Endothelial cell of umbilical vein (primary cell): ENCODE measurements at regions of chr9 and their contacts with region 1.

Region 1: GRCh38 chr9:83544002-83544698 is 5.9 kb upstream of the FRMD3 start:
- DNase-seq: peak; percentile 65
- H3K4me3 ChIP-seq: no peak overlapping the region
- H3K27ac ChIP-seq: no peak overlapping the region
- H3K4me1 ChIP-seq: no peaks in the 10 kb centered on the region
- H3K27me3 ChIP-seq: peaks cover 2% of the 10 kb centered on the region in 2 experiments
- CTCF ChIP-seq: peak; percentile 70 to 75
- POLR2A ChIP-seq: no peak

Region 2: DNA sequence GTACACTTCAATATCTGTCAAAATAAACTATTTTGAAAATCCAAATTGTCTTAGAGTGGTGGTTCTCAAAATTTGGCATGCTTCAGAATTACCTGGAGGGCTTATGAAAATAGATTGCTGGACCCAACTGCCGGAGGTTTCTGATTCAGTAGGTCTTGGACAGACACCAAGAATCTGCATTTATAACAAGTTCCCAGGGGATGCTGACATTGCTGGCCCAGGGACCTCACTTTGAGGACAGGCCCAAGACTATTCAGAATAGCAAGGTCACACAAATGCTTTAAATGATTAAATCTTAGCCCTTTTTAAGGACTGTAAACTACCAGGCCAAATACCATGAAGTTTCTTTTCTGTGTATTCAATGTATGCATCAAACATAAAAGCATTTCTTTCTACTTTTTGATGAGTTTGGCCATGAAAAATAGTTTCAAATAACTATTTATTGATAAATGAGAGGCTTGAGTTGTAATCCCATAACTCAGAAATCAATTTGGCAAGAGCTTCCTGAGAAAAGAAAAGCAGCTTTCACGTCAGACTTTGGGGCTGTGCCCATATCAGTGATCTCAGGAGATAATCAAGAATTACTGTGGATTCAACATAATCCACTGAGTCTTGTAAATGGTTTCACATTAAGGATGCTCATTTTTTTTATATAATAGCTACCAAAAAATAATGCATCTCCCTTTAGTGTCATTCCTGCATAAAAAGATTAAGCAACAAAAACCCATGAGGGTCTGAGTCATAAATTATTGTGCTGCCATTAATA is 197.3 kb before region 1 on chr9:
- CTCF ChIA-PET with region 1: interaction called, 10 read pairs
- POLR2A ChIA-PET with region 1: no interaction called
- dilution Hi-C with region 1: no loop called
- intact Hi-C with region 1: no loop called
- DNase-seq: no peak
- H3K4me3 ChIP-seq: no peak overlapping the region
- H3K27ac ChIP-seq: no peak overlapping the region
- H3K4me1 ChIP-seq: no peaks in the 10 kb centered on the region
- H3K27me3 ChIP-seq: no peaks in the 10 kb centered on the region
- CTCF ChIP-seq: no peak
- POLR2A ChIP-seq: no peak

Region 3: GRCh38 chr9:83526901-83527300 is 17.2 kb before region 1 on chr9:
- CTCF ChIA-PET with region 1: interaction called, 16 read pairs
- POLR2A ChIA-PET with region 1: no interaction called
- dilution Hi-C with region 1: no loop called
- intact Hi-C with region 1: no loop called
- DNase-seq: no peak
- H3K4me3 ChIP-seq: no peak overlapping the region
- H3K27ac ChIP-seq: no peak overlapping the region
- H3K4me1 ChIP-seq: no peaks in the 10 kb centered on the region
- H3K27me3 ChIP-seq: peaks cover 0 to 2% of the 10 kb centered on the region in 2 experiments
- CTCF ChIP-seq: no peak
- POLR2A ChIP-seq: no peak